PC-3 (cell line): ENCODE measurements at regions of chr2 and their contacts with region 1.

Region 1: DNA sequence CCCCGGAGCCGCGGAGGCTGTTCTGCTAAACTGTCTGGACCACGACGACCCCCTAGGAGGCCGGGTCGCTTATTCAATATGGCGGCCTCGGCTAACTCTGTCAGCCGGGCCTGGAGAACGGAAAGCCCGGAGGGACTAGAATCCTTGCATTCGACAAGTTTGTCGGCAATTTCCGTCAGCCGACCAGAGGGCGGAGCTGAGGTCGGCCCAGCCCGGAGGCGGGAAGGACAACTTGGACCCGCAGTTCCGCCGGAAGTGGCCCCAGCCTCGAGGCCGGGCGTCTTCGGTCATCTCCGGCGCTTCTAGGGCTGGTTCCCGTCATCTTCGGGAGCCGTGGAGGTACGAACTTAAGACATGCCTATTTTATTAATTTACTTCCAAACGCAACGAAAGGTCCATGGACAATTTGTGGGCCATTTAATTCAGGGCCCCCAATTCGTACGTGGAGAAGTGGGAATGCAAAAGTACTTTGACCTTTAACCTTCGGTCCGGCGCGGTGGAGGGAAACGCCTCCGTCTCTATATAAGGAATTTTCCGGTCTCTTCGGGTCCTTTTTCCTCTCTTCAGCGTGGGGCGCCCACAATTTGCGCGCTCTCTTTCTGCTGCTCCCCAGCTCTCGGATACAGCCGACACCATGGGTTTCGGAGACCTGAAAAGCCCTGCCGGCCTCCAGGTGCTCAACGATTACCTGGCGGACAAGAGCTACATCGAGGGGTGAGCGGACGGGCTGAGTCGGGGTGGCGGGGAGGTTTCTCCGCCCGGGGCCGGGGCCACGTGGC is at the starts of genes EEF1B2 and NDUFS1:
- DNase-seq: peak; percentile 99
- ATAC-seq: peak; percentile 90
- H3K4me3 ChIP-seq: peak within 1 kb of the TSS; percentile 87
- H3K27ac ChIP-seq: peak within 1 kb of the TSS; percentile 70
- H3K4me1 ChIP-seq: peaks cover 27% of the 10 kb centered on the region
- H3K27me3 ChIP-seq: no peaks in the 10 kb centered on the region
- CTCF ChIP-seq: no peak
- total RNA-seq, gene EEF1B2: 596 and 616 TPM in 2 replicates
- total RNA-seq, gene NDUFS1: 80.7 and 110 TPM in 2 replicates

Region 2: DNA sequence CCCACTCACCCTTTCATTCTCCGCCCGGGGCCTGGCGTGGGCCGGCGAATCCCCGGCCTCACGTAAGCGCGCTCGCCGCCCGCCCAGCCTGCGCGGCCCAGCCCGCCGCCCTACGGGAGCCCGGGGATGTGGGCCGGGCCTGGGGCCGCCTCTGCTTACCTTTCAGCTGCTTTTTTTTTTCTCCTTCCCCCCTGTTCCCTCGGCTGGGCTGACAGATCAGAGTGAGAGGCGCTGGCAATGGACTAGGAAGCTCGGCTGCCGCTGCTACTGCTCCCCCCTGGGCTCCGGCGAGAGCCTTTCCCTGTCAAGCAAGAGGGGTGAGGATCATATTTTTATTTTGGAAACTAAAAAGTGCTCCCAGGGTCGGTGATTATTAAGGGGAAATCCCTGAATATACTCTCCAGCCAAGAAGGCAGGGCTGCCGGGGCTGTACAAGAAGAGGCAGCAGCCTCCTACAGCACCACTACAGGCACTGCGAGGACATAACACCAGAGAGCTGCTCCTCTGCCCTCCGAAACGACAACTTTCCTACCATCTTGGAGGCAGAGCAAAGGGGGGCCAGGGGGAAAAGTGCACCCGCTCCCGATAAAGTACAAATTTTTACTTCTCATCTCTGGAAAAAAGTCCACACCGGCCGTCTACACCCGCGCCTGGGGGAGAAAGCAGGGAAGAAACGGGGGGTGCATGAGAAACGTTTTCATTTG is 73.6 kb before region 1 on chr2 and contains the start of gene INO80D:
- CTCF ChIA-PET with region 1: interaction called, 3 read pairs
- POLR2A ChIA-PET with region 1: interaction called, 3 read pairs
- intact Hi-C with region 1: loop called (anchors 2 kb)
- DNase-seq: peak; percentile 70
- ATAC-seq: peak; percentile 69
- H3K4me3 ChIP-seq: peak within 1 kb of the TSS; percentile 95
- H3K27ac ChIP-seq: peak within 1 kb of the TSS; percentile 87
- H3K4me1 ChIP-seq: peaks cover 16% of the 10 kb centered on the region
- H3K27me3 ChIP-seq: no peaks in the 10 kb centered on the region
- CTCF ChIP-seq: peak; percentile 54
- total RNA-seq, gene INO80D: 8.8 and 9.7 TPM in 2 replicates

Region 3: GRCh38 chr2:206112108-206112507 is 47.4 kb before region 1 on chr2:
- CTCF ChIA-PET with region 1: no interaction called
- POLR2A ChIA-PET with region 1: no interaction called
- intact Hi-C with region 1: loop called (anchors 2 kb)
- DNase-seq: no peak
- ATAC-seq: 0 out of 2 replicates have a peak, but pooled peaks have one; percentile 14
- H3K4me3 ChIP-seq: no peak overlapping the region
- H3K27ac ChIP-seq: no peak overlapping the region
- H3K4me1 ChIP-seq: peaks cover 11% of the 10 kb centered on the region
- H3K27me3 ChIP-seq: no peaks in the 10 kb centered on the region
- CTCF ChIP-seq: no peak

Region 4: DNA sequence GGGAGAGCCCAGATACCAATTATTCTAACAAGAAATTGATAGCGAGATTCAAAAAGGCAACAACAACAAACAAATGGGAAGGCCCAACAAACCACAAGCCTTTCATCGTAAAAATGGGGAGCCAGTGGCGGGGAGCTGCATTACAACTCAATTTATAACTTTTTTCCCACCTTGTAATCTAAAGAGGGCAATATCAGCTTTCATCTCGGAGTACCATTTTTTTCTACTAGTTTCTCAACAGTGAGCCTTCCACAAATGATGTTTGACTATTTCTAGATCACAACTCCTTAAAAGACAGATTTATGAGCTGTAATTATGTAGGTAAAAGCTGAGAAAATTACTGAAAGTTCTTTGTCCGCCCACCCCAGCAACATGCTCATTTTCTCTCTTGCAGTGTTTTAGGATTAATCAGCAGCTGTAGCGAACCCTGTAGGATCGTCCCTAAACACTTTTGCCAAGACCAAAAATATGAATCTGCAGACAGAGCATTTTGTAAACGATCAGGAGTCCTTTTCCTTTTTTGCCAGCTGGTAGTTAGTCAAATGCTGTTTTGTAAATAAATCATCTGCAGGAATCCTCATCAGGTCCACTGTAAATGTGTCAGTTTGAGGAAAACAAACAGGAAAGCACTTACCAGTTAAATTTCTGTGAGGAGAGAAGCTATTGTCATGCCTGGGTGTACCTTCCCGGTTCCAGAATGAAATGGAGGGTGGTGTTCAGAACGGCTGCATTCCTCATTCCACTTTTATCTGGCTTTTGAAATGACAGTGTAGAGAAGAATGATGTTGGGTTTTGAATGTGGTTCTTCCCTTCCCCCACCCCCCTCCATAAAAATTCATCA is 53.4 kb after region 1 on chr2:
- CTCF ChIA-PET with region 1: no interaction called
- POLR2A ChIA-PET with region 1: no interaction called
- intact Hi-C with region 1: loop called (anchors 1 kb)
- DNase-seq: peak; percentile 64
- ATAC-seq: peak; percentile 80
- H3K4me3 ChIP-seq: peak overlapping the region; percentile 62
- H3K27ac ChIP-seq: peak overlapping the region; percentile 4
- H3K4me1 ChIP-seq: peaks cover 27% of the 10 kb centered on the region
- H3K27me3 ChIP-seq: peaks cover 3% of the 10 kb centered on the region; the same call in 1 of the 2 replicates
- CTCF ChIP-seq: no peak

Region 5: GRCh38 chr2:206260188-206261012 is 100.9 kb after region 1 on chr2:
- CTCF ChIA-PET with region 1: no interaction called
- POLR2A ChIA-PET with region 1: no interaction called
- intact Hi-C with region 1: loop called (anchors 1 kb)
- DNase-seq: peak; percentile 66
- ATAC-seq: peak; percentile 96
- H3K4me3 ChIP-seq: no peak overlapping the region
- H3K27ac ChIP-seq: no peak overlapping the region
- H3K4me1 ChIP-seq: no peaks in the 10 kb centered on the region
- H3K27me3 ChIP-seq: peaks cover 68% of the 10 kb centered on the region
- CTCF ChIP-seq: peak; percentile 67

Region 6: DNA sequence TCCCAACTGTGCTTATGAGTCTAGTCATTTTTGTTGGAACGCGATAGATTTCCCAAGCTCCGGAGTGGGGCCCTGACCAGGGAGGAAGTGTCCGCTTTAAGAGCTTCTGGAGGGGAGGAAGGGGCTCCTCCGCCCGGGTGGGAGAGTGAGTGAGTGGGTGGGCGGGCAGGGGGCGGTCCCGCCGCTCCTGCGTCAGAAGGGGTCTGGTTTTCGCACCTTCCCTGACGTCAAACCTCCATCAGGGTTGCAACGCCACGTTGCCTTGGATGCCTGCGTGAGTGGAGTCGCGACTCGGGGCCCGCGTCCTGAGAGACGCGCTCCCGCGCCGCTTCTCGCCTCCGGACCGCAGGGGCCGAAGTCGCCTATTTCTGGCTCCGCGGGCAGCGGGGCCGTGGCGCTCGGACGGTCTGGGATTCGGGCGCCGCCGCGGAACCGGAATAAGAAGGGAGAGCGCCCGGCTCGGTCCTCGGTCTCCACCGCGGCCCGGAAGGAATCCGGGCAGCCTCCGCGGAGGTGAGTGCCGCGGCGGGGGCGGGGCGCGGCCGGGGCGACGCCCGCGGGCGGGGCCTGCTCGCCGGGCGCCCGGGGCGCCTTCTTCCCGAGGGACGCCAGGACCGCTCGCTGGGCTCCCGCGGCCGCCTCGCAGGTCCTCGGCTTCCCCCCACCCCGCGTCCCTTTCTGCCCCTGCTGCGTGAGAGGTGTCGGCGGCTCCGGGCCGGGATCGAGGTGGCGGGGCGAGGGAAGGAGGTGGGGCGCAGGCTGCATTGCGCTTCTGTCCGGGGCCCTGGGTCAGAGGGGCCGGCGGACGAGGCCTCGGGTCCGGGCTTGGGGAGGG is 115.1 kb after region 1 on chr2 and contains the start of gene ZDBF2:
- CTCF ChIA-PET with region 1: no interaction called
- POLR2A ChIA-PET with region 1: no interaction called
- intact Hi-C with region 1: loop called (anchors 5 kb)
- DNase-seq: peak; percentile 38
- ATAC-seq: peak; percentile 72
- H3K4me3 ChIP-seq: peak within 1 kb of the TSS; percentile 62
- H3K27ac ChIP-seq: 0 out of 2 replicates have a peak within 1 kb of the TSS, but pooled peaks have one; percentile 8
- H3K4me1 ChIP-seq: no peaks in the 10 kb centered on the region
- H3K27me3 ChIP-seq: peaks cover 56% of the 10 kb centered on the region
- CTCF ChIP-seq: no peak
- total RNA-seq, gene ZDBF2: 1.9 and 4.2 TPM in 2 replicates

Region 7: GRCh38 chr2:206442833-206443734 is 283.5 kb after region 1 on chr2 and contains the start of gene ADAM23:
- CTCF ChIA-PET with region 1: no interaction called
- POLR2A ChIA-PET with region 1: no interaction called
- intact Hi-C with region 1: loop called (anchors 5 kb)
- DNase-seq: peak; percentile 12
- ATAC-seq: peak; percentile 47
- H3K4me3 ChIP-seq: peak within 1 kb of the TSS; percentile 64
- H3K27ac ChIP-seq: no peak within 1 kb of the TSS
- H3K4me1 ChIP-seq: no peaks in the 10 kb centered on the region
- H3K27me3 ChIP-seq: peaks cover 73% of the 10 kb centered on the region
- CTCF ChIP-seq: no peak
- total RNA-seq, gene ADAM23: 0.22 and 0.69 TPM in 2 replicates

Region 8: DNA sequence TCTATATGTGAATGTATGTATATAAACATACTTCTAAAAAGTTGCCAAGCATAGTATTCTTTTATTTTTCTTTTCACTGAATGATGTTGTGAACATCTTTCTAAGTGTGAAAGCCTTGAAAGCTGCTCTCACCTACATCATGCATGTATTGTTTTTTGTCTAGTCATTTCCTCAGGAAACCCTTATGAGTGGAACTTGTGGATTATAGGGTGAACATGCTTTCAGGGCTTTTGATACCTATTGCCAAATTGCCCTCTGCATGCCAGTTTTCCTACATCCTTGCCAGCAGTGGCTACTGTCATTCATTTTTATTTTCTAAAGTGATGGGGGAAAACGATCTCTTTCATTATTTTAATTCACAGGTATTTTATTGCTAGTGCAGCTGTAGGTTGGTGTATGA is 362.1 kb after region 1 on chr2:
- CTCF ChIA-PET with region 1: no interaction called
- POLR2A ChIA-PET with region 1: no interaction called
- intact Hi-C with region 1: no loop called
- DNase-seq: no peak
- ATAC-seq: no peak
- H3K4me3 ChIP-seq: no peak overlapping the region
- H3K27ac ChIP-seq: no peak overlapping the region
- H3K4me1 ChIP-seq: no peaks in the 10 kb centered on the region
- H3K27me3 ChIP-seq: peaks cover 26% of the 10 kb centered on the region; the same call in 1 of the 2 replicates
- CTCF ChIP-seq: no peak